ENCODE measurements at regions of chr20 and their contacts with region 1.

Region 1: GRCh38 chr20:50575847-50576720 is 65.9 kb downstream of the PTPN1 start:
- DNase-seq: no peak
- ATAC-seq: peak; percentile 85
- H3K4me3 ChIP-seq: no peak overlapping the region
- H3K27ac ChIP-seq: peak overlapping the region; percentile 23; the same call in 1 of the 2 replicates
- H3K4me1 ChIP-seq: peaks cover 37% of the 10 kb centered on the region
- H3K27me3 ChIP-seq: no peaks in the 10 kb centered on the region
- CTCF ChIP-seq: peak; percentile 92

Region 2: GRCh38 chr20:50189681-50190582 is 386.2 kb before region 1 on chr20:
- CTCF ChIA-PET with region 1: interaction called, 3 read pairs
- POLR2A ChIA-PET with region 1: no interaction called
- in situ Hi-C with region 1: no loop called
- intact Hi-C with region 1: loop called (anchors 5 kb)
- DNase-seq: no peak
- ATAC-seq: peak; percentile 72
- H3K4me3 ChIP-seq: peak overlapping the region; percentile 62 to 97
- H3K27ac ChIP-seq: peak overlapping the region; percentile 48; the same call in 1 of the 2 replicates
- H3K4me1 ChIP-seq: peaks cover 37% of the 10 kb centered on the region
- H3K27me3 ChIP-seq: no peaks in the 10 kb centered on the region
- CTCF ChIP-seq: peak; percentile 83

Region 3: GRCh38 chr20:50353289-50353961 is 222.7 kb before region 1 on chr20:
- CTCF ChIA-PET with region 1: no interaction called
- POLR2A ChIA-PET with region 1: no interaction called
- in situ Hi-C with region 1: no loop called
- intact Hi-C with region 1: no loop called
- DNase-seq: no peak
- ATAC-seq: no peak
- H3K4me3 ChIP-seq: no peak overlapping the region
- H3K27ac ChIP-seq: no peak overlapping the region
- H3K4me1 ChIP-seq: no peaks in the 10 kb centered on the region
- H3K27me3 ChIP-seq: no peaks in the 10 kb centered on the region
- CTCF ChIP-seq: no peak

Region 4: DNA sequence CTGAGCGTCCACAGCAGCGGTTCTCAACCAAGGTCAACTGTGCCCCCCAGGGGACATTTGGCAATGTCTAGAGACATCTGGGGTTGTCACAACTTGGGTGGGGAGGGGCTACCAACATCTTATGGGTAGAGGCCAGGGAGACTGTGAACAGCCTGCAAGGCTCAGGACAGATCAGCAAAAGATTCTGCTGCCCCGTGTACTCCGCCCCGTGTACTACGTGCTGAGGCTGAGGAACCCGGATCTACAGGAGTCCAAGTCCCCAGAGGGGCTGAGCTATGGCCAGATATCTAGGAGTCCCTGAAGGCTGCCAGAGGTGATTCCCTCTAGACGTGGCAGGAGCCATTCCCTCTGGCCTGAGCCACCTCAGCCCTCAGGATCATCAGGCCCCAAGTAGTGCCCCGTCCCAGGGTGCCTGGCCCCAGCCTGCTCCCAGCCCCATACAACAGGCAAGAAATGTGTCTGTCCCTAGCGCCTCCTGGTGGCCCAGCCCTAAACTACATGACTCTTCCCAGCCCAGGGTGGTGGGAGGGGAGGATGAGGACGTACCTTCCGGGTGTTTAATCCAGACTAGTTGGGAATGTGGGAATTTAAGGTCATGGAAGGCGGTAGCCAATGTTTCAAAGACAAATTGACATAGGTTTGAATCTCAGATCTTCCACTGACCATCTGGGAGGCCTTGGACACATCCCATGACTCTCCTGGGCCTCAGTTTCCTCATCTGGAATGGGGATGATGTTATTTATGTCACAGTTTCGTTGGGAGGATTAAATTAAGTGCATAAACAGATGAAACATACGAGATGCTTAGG is 115.4 kb before region 1 on chr20:
- CTCF ChIA-PET with region 1: interaction called, 10 read pairs
- POLR2A ChIA-PET with region 1: no interaction called
- in situ Hi-C with region 1: no loop called
- intact Hi-C with region 1: no loop called
- DNase-seq: peak; percentile 74
- ATAC-seq: peak; percentile 91
- H3K4me3 ChIP-seq: no peak overlapping the region
- H3K27ac ChIP-seq: no peak overlapping the region
- H3K4me1 ChIP-seq: peaks cover 8% of the 10 kb centered on the region
- H3K27me3 ChIP-seq: no peaks in the 10 kb centered on the region
- CTCF ChIP-seq: peak; percentile 94

Region 5: DNA sequence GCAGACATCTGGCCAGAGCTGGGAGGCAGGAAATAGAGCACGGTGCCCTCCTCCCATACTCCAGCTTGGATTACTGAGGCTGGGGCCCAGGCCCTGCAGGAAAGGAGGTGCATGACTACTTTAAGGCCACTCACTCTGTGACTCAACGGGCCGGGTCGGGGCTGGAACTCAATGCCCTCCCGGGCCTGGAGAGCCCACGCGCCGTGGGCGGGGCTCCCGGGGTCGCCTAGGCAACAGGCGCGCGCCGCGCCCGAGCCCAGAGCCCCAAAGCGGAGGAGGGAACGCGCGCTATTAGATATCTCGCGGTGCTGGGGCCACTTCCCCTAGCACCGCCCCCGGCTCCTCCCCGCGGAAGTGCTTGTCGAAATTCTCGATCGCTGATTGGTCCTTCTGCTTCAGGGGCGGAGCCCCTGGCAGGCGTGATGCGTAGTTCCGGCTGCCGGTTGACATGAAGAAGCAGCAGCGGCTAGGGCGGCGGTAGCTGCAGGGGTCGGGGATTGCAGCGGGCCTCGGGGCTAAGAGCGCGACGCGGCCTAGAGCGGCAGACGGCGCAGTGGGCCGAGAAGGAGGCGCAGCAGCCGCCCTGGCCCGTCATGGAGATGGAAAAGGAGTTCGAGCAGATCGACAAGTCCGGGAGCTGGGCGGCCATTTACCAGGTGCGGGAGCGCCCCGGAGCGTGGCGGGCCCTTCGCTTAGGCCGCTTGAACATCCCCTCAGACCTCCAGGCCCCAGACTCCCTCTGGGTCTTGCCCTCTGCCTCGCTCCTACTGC is 66.0 kb before region 1 on chr20 and contains the start of gene PTPN1:
- CTCF ChIA-PET with region 1: no interaction called
- POLR2A ChIA-PET with region 1: no interaction called
- in situ Hi-C with region 1: no loop called
- intact Hi-C with region 1: loop called (anchors 10 kb)
- DNase-seq: peak; percentile 97
- ATAC-seq: peak; percentile 98
- H3K4me3 ChIP-seq: peak within 1 kb of the TSS; percentile 66 to 90
- H3K27ac ChIP-seq: peak within 1 kb of the TSS; percentile 92
- H3K4me1 ChIP-seq: peaks cover 37% of the 10 kb centered on the region
- H3K27me3 ChIP-seq: no peaks in the 10 kb centered on the region
- CTCF ChIP-seq: no peak
- total RNA-seq, gene PTPN1: 42.2 TPM

Region 6: GRCh38 chr20:50595988-50596689 is 20.1 kb after region 1 on chr20:
- CTCF ChIA-PET with region 1: no interaction called
- POLR2A ChIA-PET with region 1: no interaction called
- in situ Hi-C with region 1: no loop called
- intact Hi-C with region 1: no loop called
- DNase-seq: no peak
- ATAC-seq: no peak; the same call in 1 of the 2 replicates
- H3K4me3 ChIP-seq: no peak overlapping the region
- H3K27ac ChIP-seq: peak overlapping the region; percentile 71
- H3K4me1 ChIP-seq: peaks cover 54% of the 10 kb centered on the region
- H3K27me3 ChIP-seq: no peaks in the 10 kb centered on the region
- CTCF ChIP-seq: no peak

Measured in Panc1 (cell line).